CD8-positive, alpha-beta memory T cell (primary cell): ENCODE measurements at regions of chr1 and their contacts with region 1.

Region 1: GRCh38 chr1:35451125-35451528 is 106.1 kb downstream of the KIAA0319L start:
- DNase-seq: peak; percentile 59 to 83 (median 60)
- H3K4me3 ChIP-seq: no peak overlapping the region
- H3K4me3 Mint-ChIP-seq: peak overlapping the region in 1 of 7 donors; percentile 15
- H3K27ac ChIP-seq: no peak overlapping the region
- H3K27ac Mint-ChIP-seq: peak overlapping the region; percentile 34 to 94 (median 82)
- H3K4me1 ChIP-seq: peaks cover 17% of the 10 kb centered on the region
- H3K4me1 Mint-ChIP-seq: peaks cover 10 to 37% (median 35%) of the 10 kb centered on the region in 3 donors
- H3K27me3 ChIP-seq: no peaks in the 10 kb centered on the region
- H3K27me3 Mint-ChIP-seq: no peaks in the 10 kb centered on the region

Region 2: DNA sequence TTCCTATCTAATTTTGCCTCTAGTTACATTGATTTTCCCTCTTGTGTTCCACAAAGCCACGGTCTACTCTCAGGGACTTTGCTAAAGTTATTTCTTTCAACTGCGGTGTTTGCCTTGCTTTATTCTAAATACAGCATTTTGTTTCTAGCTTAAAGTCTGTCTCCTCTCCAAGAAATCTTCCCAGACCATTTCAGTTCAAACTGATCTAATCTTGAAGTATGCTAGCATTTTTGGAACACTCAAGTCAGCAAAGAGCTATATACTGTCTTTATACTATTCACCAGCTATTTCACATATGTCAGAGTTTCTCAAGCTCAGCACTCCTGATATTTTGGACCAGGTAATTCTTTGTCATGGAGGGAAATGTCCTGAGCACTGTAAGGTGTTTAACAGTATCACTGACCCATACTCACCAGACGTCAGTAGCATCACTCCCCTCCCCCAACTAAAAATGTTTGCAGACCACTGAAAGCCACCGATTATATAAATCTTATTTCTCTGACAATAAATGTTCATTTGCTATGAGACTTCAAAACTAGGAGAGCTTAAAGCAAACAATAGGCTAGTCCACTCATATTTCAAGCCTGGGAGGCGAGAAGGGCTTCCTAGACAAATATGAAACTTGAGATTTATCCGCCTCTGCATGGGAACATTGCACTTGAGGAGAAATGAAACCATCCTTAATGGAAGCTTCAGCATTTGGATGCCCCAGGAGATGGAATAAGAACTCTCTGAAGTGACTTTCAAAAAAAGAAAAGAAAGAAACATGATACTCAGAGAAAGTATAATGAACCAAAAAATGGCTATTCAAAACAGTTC is 24.9 kb after region 1 on chr1:
- CTCF ChIA-PET with region 1: no interaction called
- POLR2A ChIA-PET with region 1: no interaction called
- DNase-seq: no peak
- H3K4me3 ChIP-seq: no peak overlapping the region
- H3K4me3 Mint-ChIP-seq: no peak overlapping the region
- H3K27ac ChIP-seq: no peak overlapping the region
- H3K27ac Mint-ChIP-seq: peak overlapping the region in 1 of 8 donors; percentile 2
- H3K4me1 ChIP-seq: no peaks in the 10 kb centered on the region
- H3K4me1 Mint-ChIP-seq: peaks cover 0 to 2% (median 0%) of the 10 kb centered on the region in 3 donors
- H3K27me3 ChIP-seq: no peaks in the 10 kb centered on the region
- H3K27me3 Mint-ChIP-seq: no peaks in the 10 kb centered on the region

Region 3: DNA sequence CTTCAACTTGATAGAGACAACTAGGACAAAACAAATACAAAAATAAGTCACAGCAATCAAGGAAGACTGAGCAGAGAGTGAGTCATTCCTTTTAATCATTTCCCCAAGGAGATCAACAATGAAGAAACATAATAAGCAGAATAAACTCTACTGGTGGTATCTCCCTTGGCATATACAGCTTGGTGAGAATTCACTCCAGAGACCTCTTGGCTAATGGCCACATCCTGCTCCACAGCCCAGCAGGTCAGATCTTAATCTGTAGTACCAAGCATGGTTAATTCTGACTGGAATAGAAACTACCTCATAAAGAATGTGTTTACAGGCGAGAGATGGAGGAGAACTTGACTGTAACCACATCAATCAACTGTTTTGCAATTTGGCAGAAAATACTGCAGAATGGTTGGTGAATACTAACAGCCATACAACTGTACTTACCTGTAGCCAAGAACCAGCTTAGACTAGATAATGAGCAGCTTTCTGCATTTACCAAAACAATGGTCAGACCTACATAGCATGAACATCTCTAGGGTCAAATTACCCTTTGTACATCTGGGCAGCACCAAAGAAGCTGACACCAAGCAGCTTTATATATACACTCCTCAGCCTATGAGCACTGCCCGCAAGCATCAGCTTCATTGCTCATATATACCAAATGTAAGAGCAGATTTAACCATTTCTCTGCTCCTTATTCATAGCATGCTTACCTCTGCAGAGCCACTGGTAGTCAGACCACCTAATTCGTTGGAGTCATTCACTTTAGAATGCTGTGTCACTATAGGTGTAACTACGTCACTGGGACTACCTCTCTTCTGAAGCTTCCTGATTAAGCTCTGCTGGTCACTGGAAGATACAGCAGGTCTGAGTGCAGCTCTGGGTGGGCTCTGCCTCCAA is 55.0 kb after region 1 on chr1:
- CTCF ChIA-PET with region 1: interaction called, 34 read pairs
- POLR2A ChIA-PET with region 1: interaction called, 3 read pairs
- DNase-seq: peak; percentile 29 to 78 (median 39)
- H3K4me3 ChIP-seq: peak overlapping the region; percentile 10
- H3K4me3 Mint-ChIP-seq: peak overlapping the region; percentile 22 to 80 (median 74)
- H3K27ac ChIP-seq: peak overlapping the region; percentile 48
- H3K27ac Mint-ChIP-seq: peak overlapping the region; percentile 67 to 99 (median 94)
- H3K4me1 ChIP-seq: peaks cover 45% of the 10 kb centered on the region
- H3K4me1 Mint-ChIP-seq: peaks cover 55 to 83% (median 79%) of the 10 kb centered on the region in 3 donors
- H3K27me3 ChIP-seq: no peaks in the 10 kb centered on the region
- H3K27me3 Mint-ChIP-seq: no peaks in the 10 kb centered on the region

Region 4: GRCh38 chr1:35539073-35539823 is 88.1 kb after region 1 on chr1:
- CTCF ChIA-PET with region 1: interaction called, 63 read pairs
- POLR2A ChIA-PET with region 1: interaction called, 5 read pairs
- DNase-seq: peak in 3 of 5 donors; percentile 52 to 79 (median 69)
- H3K4me3 ChIP-seq: peak overlapping the region; percentile 27
- H3K4me3 Mint-ChIP-seq: peak overlapping the region; percentile 61 to 85 (median 77)
- H3K27ac ChIP-seq: no peak overlapping the region
- H3K27ac Mint-ChIP-seq: peak overlapping the region; percentile 68 to 98 (median 93)
- H3K4me1 ChIP-seq: peaks cover 56% of the 10 kb centered on the region
- H3K4me1 Mint-ChIP-seq: peaks cover 68 to 91% (median 83%) of the 10 kb centered on the region in 3 donors
- H3K27me3 ChIP-seq: no peaks in the 10 kb centered on the region
- H3K27me3 Mint-ChIP-seq: no peaks in the 10 kb centered on the region

Region 5: GRCh38 chr1:35557292-35558063 is 106.4 kb after region 1 on chr1 and contains the starts of genes KIAA0319L and NCDN:
- CTCF ChIA-PET with region 1: interaction called, 25 read pairs
- POLR2A ChIA-PET with region 1: interaction called, 3 read pairs
- DNase-seq: peak; percentile 93 to 97 (median 93)
- H3K4me3 ChIP-seq: peak within 1 kb of the TSS; percentile 71
- H3K4me3 Mint-ChIP-seq: peak within 1 kb of the TSS; percentile 94 to 100 (median 97)
- H3K27ac ChIP-seq: peak within 1 kb of the TSS; percentile 83
- H3K27ac Mint-ChIP-seq: peak within 1 kb of the TSS; percentile 91 to 99 (median 96)
- H3K4me1 ChIP-seq: peaks cover 31% of the 10 kb centered on the region
- H3K4me1 Mint-ChIP-seq: peaks cover 51 to 76% (median 70%) of the 10 kb centered on the region in 3 donors
- H3K27me3 ChIP-seq: no peaks in the 10 kb centered on the region
- H3K27me3 Mint-ChIP-seq: no peaks in the 10 kb centered on the region
- total RNA-seq, gene KIAA0319L: 28.5 to 30.4 TPM
- total RNA-seq, gene NCDN: 49.0 to 50.4 TPM

Region 6: GRCh38 chr1:35715568-35716002 is 264.5 kb after region 1 on chr1:
- CTCF ChIA-PET with region 1: interaction called, 14 read pairs
- POLR2A ChIA-PET with region 1: no interaction called
- DNase-seq: peak; percentile 61 to 85 (median 66)
- H3K4me3 ChIP-seq: no peak overlapping the region
- H3K4me3 Mint-ChIP-seq: peak overlapping the region in 6 of 7 donors; percentile 24 to 76 (median 68)
- H3K27ac ChIP-seq: no peak overlapping the region
- H3K27ac Mint-ChIP-seq: peak overlapping the region in 6 of 8 donors; percentile 43 to 88 (median 64)
- H3K4me1 ChIP-seq: peaks cover 23% of the 10 kb centered on the region
- H3K4me1 Mint-ChIP-seq: peaks cover 31 to 41% (median 41%) of the 10 kb centered on the region in 3 donors
- H3K27me3 ChIP-seq: no peaks in the 10 kb centered on the region
- H3K27me3 Mint-ChIP-seq: no peaks in the 10 kb centered on the region

Region 7: GRCh38 chr1:35769188-35769758 is 318.1 kb after region 1 on chr1:
- CTCF ChIA-PET with region 1: interaction called, 13 read pairs
- POLR2A ChIA-PET with region 1: no interaction called
- DNase-seq: peak; percentile 76 to 88 (median 80)
- H3K4me3 ChIP-seq: peak overlapping the region; percentile 87
- H3K4me3 Mint-ChIP-seq: peak overlapping the region; percentile 84 to 97 (median 94)
- H3K27ac ChIP-seq: peak overlapping the region; percentile 81
- H3K27ac Mint-ChIP-seq: peak overlapping the region; percentile 47 to 98 (median 80)
- H3K4me1 ChIP-seq: peaks cover 6% of the 10 kb centered on the region
- H3K4me1 Mint-ChIP-seq: peaks cover 7 to 17% (median 13%) of the 10 kb centered on the region in 3 donors
- H3K27me3 ChIP-seq: no peaks in the 10 kb centered on the region
- H3K27me3 Mint-ChIP-seq: no peaks in the 10 kb centered on the region